ENCODE measurements at regions of chr13 and their contacts with region 1.

Region 1: DNA sequence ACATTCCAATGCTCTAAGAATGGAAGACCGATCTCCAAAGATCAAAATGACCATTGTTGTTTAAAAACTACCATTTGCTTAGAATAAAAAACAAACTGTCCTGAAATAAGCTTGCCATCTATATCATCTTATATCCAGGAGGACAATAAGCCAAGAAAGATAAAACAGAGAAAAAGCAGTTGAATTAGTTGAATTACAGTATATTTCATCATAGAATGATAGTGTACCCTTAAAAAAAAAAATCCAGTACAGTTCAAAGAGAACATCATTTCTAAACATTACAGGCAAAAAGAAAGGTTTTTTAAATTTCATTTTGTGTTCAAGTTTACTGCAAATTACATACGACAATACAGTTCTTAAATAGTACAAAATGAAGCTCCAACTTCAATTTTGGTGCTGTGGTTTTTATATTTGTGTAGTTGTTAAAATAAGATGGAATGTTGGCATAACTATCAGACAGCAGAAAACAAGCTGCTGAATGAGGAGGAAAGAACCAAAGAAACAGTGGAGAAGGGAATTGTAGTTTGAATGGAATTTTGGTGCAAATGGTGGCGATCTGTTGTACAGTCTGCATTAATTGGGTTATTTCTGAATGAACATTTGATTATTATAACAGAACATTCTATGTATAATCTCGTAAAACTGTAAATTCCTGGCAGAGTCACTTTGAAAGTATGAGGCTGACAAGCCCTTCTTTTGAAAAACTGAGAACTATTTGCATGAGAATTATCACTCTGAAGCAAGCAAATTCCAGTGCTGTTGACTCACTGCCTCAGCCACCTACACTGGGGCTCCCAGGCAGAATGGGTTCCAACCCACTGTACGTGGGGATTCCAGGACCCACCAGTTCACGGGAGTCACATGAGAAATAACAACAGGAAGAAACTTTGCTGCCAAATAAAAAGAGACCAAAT is 37.7 kb downstream of the LHFPL6 start:
- DNase-seq: peak in 2 of 5 donors; percentile 27 to 50
- ATAC-seq: peak; percentile 50 to 84 (median 72)
- H3K4me3 ChIP-seq: no peak overlapping the region
- H3K27ac ChIP-seq: peak overlapping the region in 8 of 12 donors; percentile 26 to 68 (median 51)
- H3K4me1 ChIP-seq: peaks cover 3 to 57% (median 37%) of the 10 kb centered on the region in 12 donors
- H3K27me3 ChIP-seq: no peaks in the 10 kb centered on the region
- CTCF ChIP-seq: no peak
- POLR2A ChIP-seq: no peak

Region 2: DNA sequence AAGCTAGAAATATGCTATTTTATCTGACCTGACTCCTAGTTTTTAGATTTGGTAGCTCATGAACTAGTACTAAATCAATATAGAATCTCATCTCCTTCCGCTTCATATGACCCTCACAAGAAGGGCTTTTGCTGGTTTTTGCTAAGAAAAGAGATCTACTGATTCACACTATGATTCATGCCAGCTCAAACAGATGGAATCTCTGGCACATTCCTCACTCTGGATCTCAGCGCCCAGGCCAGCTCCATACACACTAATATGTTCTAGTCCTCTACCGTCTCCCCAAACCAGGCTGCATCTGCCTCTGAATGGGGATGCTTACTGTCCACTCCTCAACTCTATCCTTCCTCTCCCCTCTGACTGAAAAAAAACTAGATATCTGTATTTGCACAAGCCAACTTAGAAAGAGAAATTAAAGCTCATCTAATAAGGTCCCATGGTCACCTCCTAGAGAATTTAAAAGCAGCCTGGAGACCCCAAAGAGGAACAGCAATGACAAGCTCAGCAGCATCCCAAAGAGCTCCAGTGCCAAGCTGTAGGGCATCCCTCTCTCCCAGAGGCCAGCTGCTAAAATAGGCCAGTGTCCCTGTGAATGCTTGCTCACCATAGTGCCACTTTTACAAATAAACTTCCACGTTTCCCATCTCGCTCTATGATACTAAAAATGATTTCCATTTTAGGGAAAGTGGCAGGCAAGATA is 37.2 kb before region 1 on chr13:
- intact Hi-C with region 1: loop called in 5 of 10 experiments (anchors 5 to 10 kb)
- DNase-seq: peak in 1 of 5 donors; percentile 50
- ATAC-seq: peak in 3 of 4 donors; percentile 53 to 73 (median 67)
- H3K4me3 ChIP-seq: no peak overlapping the region
- H3K27ac ChIP-seq: peak overlapping the region in 9 of 12 donors; percentile 2 to 36 (median 9)
- H3K4me1 ChIP-seq: peaks cover 3 to 88% (median 65%) of the 10 kb centered on the region in 12 donors
- H3K27me3 ChIP-seq: no peaks in the 10 kb centered on the region
- CTCF ChIP-seq: no peak
- POLR2A ChIP-seq: no peak

Region 3: DNA sequence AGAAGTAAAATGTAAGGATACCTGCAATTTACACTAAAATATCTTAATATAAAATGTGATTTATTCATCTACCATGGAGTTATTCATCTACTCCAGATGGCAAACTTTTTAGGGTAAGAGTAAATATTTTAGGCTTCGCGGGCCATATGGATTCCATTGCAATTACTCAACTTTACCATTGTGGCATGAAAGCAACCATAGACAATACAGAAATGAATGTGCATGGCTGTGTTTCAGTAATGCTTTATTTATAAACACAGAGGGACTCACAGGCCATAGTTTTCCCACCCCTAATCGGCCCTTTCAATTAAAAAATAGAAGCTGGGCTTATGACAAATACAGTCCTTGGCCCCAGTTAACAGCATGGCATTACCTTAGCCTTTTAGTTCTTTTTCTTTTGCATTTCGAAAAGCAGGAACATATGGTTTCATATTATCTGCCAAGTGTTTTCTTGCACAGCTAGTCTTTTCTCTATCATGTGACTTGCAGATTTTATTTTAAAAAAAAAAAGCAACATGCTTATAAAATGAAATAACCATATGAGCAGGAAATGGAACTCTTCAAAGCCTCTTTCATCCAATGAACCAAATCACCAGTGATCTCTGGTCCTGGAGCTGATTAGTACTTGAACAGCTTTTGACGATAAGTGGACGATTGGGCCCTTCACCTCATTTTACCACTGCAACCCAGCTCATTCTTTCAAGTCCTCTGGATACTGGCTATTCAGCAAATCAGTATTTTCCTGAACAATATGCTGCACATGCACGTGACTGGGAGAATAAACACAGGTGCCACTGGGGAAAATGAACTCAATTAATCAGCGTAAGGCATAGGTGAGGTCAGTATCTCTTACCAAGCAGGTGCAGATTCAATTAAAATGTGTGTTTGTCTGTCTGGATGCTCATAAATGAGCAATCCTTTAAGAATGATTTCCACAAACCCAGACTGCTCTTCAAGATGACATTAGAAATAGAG is 26.2 kb before region 1 on chr13:
- intact Hi-C with region 1: loop called in 1 of 10 experiments (anchors 1 kb)
- DNase-seq: no peak
- ATAC-seq: no peak
- H3K4me3 ChIP-seq: no peak overlapping the region
- H3K27ac ChIP-seq: no peak overlapping the region
- H3K4me1 ChIP-seq: peaks cover 0 to 87% (median 49%) of the 10 kb centered on the region in 12 donors
- H3K27me3 ChIP-seq: no peaks in the 10 kb centered on the region
- CTCF ChIP-seq: no peak
- POLR2A ChIP-seq: no peak

Measured in heart left ventricle (tissue), 16 donors.